Activated CD4-positive, alpha-beta T cell treated with anti-CD3 and anti-CD28 coated beads, Interleukin-2, amount 10 ng/mL, durations not matched to agents 7 days and 5 days (primary cell): ENCODE measurements at regions of chr15 and their contacts with region 1.

Region 1: GRCh38 chr15:63752075-63752684 is 81.6 kb downstream of the HERC1 start:
- DNase-seq: peak; percentile 72
- H3K4me3 Mint-ChIP-seq: no peak overlapping the region
- H3K27ac Mint-ChIP-seq: no peak overlapping the region
- H3K4me1 Mint-ChIP-seq: peaks cover 6% of the 10 kb centered on the region
- H3K27me3 Mint-ChIP-seq: no peaks in the 10 kb centered on the region

Region 2: DNA sequence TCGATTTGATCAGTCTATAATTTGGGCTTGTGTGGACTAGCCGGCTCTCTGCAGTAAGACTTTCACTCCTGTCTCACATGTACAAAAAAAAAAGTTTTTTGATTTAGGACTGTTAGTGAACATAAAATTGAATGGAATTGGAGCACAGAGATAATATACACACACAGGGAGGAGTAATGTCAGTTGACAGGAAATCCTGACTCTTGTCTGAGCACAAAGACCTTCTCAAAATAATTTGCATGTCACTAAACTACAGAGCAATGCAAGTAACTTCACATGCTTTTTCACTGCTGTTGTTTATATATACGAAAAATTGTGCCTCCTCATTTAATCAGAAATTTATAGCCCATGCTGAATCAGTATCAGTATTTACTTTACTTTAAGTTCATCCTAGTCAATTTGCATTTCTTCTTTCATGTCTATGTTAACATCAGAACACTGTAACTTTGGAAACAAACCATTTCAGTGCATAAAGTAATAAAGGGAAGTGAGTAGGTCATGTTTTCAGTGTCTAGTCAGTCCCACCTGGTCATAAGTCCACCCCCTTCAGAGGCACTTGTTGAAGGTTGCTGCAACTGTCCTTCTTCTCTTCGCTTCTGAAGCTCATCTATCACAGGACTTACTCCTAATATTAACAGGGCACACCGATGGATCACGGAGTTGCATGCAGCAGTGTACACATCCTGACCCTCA is 39.2 kb before region 1 on chr15:
- CTCF ChIA-PET with region 1: no interaction called
- POLR2A ChIA-PET with region 1: no interaction called
- DNase-seq: no peak
- H3K4me3 Mint-ChIP-seq: no peak overlapping the region
- H3K27ac Mint-ChIP-seq: peak overlapping the region; percentile 42
- H3K4me1 Mint-ChIP-seq: peaks cover 23% of the 10 kb centered on the region
- H3K27me3 Mint-ChIP-seq: no peaks in the 10 kb centered on the region

Region 3: GRCh38 chr15:63763476-63764123 is 11.4 kb after region 1 on chr15:
- CTCF ChIA-PET with region 1: interaction called, 14 read pairs
- POLR2A ChIA-PET with region 1: no interaction called
- DNase-seq: peak; percentile 11
- H3K4me3 Mint-ChIP-seq: no peak overlapping the region
- H3K27ac Mint-ChIP-seq: peak overlapping the region; percentile 63
- H3K4me1 Mint-ChIP-seq: peaks cover 40% of the 10 kb centered on the region
- H3K27me3 Mint-ChIP-seq: no peaks in the 10 kb centered on the region

Region 4: GRCh38 chr15:63833021-63833696 is 81.0 kb after region 1 on chr15:
- CTCF ChIA-PET with region 1: no interaction called
- POLR2A ChIA-PET with region 1: no interaction called
- DNase-seq: peak; percentile 42
- H3K4me3 Mint-ChIP-seq: peak overlapping the region; percentile 95
- H3K27ac Mint-ChIP-seq: peak overlapping the region; percentile 89
- H3K4me1 Mint-ChIP-seq: peaks cover 51% of the 10 kb centered on the region
- H3K27me3 Mint-ChIP-seq: peaks cover 3% of the 10 kb centered on the region